Left colon (tissue), 2 donors: ENCODE measurements at regions of chr10 and their contacts with region 1.

Region 1: DNA sequence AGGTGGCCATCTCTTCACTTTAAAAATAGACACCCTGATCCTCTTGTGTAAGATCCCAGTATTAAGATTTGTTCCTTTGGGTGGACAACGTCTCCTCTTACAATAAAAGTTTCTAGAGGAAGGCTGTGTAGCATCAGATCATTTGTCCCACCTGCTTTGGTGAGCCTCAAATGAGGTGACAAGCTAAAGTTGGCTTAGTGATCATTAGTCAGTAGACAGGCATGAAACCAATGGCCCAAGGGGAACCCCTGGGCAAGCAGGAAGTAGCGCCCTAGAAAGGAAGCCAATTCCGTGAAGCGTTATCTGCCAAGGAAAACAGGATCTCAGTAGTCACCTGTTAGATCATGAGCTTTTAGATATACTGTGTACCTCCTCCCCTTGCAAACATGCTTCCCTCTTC is 66.8 kb downstream of the PCGF5 start:
- DNase-seq: no peak
- ATAC-seq: no peak

Region 2: GRCh38 chr10:90652519-90652918 is 634.8 kb before region 1 on chr10:
- intact Hi-C with region 1: no loop called
- DNase-seq: no peak
- ATAC-seq: no peak

Region 3: DNA sequence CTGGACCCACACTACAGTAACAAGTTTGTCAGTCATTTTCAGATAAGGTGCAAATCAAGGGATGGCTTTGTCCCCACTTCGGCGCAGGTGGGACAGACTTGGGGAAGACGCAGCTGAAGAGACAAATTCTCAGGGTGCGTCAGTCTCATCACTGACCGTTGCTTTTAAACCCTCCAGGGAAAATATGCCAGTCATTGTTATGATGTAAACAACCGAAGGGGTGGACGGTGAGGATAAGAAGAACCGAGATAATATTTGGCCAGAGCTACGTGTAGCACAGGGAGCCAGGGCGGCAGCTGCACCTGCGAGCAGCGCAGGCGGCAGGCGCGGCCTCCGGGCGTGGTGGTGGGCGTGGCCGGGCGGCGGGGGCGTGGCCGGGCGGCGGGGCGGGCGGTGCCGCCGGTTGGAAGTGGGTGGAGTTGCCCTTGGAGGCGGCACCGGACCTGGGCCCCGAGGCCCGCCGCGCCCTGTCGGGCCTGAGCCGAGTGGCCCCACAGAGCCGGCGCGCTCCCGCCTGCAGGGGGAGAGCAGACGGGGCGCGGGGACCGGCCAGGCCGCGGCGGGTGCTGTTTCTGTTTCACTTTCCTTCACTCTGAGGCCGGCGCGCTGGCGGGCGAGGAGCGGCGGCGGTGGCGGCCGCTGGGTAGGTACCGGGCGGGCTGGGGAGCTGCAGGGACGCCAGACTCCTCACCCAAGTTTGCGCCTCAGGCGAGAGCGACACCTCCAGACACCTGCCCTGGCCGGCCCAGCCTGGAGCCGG is 66.9 kb before region 1 on chr10 and contains the start of gene PCGF5:
- intact Hi-C with region 1: no loop called
- DNase-seq: peak; percentile 92 to 95
- ATAC-seq: peak; percentile 96
- total RNA-seq, gene PCGF5: 65.5 to 65.6 TPM

Region 4: GRCh38 chr10:91910467-91910866 is 623.2 kb after region 1 on chr10:
- intact Hi-C with region 1: loop called in 1 of 2 experiments (anchors 10 kb)
- DNase-seq: no peak
- ATAC-seq: no peak